Activated naive CD4-positive, alpha-beta T cell treated with anti-CD3 and anti-CD28 coated beads for 36 hours (primary cell): ENCODE measurements at regions of chr12 and their contacts with region 1.

Region 1: DNA sequence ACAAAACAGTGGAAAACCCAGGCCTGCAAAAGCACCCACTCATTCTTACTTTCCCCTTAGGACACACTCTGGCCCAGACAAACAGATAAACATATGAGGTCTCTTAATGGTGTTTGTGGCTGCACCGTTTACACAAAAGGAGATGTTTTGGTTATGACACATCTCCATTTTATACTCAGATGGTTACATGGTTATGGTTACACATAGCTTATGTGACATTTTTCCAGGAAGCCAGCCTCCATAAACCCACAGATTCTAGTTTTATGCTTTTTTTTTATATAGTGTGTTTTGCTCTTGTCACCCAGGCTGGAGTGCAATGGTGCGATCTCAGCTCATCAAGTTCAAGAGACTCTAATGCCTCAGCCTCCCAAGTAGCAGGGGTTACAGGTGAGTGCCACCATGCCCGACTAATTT is 3.5 kb upstream of the KLRD1 start:
- DNase-seq: peak; percentile 59
- H3K4me3 Mint-ChIP-seq: no peak overlapping the region
- H3K27ac Mint-ChIP-seq: no peak overlapping the region
- H3K4me1 Mint-ChIP-seq: peaks cover 49% of the 10 kb centered on the region
- H3K27me3 Mint-ChIP-seq: peaks cover 5% of the 10 kb centered on the region

Region 2: GRCh38 chr12:10320643-10321042 is 16.5 kb after region 1 on chr12:
- CTCF ChIA-PET with region 1: interaction called, 4 read pairs
- intact Hi-C with region 1: loop called (anchors 1 kb)
- DNase-seq: no peak
- H3K4me3 Mint-ChIP-seq: no peak overlapping the region
- H3K27ac Mint-ChIP-seq: peak overlapping the region; percentile 2
- H3K4me1 Mint-ChIP-seq: peaks cover 28% of the 10 kb centered on the region
- H3K27me3 Mint-ChIP-seq: no peaks in the 10 kb centered on the region

Region 3: DNA sequence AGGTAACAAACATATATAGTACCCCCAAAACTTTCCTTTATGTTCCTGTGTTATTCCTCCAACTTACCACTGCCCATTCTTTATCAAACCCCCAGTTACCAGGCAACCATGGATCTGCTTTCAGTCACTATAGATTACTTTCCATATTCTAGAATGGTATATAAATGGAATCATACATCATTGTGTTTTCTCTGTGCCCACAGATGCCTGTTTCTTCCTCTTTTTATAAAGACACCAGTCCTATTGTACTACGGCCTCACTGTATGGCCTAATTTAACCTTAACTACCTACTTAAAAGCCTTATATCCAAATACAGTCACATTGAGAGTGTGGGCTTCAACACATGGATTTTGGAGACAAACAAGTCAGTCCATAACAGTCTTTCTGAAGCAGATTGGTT is 632.3 kb after region 1 on chr12:
- CTCF ChIA-PET with region 1: no interaction called
- intact Hi-C with region 1: no loop called
- DNase-seq: no peak
- H3K4me3 Mint-ChIP-seq: no peak overlapping the region
- H3K27ac Mint-ChIP-seq: no peak overlapping the region
- H3K4me1 Mint-ChIP-seq: no peaks in the 10 kb centered on the region
- H3K27me3 Mint-ChIP-seq: no peaks in the 10 kb centered on the region